ENCODE measurements at regions of chr17 and their contacts with region 1.

Region 1: GRCh38 chr17:81083125-81083765 is 48.3 kb downstream of the BAIAP2 start:
- DNase-seq: no peak
- ATAC-seq: peak; percentile 59

Region 2: DNA sequence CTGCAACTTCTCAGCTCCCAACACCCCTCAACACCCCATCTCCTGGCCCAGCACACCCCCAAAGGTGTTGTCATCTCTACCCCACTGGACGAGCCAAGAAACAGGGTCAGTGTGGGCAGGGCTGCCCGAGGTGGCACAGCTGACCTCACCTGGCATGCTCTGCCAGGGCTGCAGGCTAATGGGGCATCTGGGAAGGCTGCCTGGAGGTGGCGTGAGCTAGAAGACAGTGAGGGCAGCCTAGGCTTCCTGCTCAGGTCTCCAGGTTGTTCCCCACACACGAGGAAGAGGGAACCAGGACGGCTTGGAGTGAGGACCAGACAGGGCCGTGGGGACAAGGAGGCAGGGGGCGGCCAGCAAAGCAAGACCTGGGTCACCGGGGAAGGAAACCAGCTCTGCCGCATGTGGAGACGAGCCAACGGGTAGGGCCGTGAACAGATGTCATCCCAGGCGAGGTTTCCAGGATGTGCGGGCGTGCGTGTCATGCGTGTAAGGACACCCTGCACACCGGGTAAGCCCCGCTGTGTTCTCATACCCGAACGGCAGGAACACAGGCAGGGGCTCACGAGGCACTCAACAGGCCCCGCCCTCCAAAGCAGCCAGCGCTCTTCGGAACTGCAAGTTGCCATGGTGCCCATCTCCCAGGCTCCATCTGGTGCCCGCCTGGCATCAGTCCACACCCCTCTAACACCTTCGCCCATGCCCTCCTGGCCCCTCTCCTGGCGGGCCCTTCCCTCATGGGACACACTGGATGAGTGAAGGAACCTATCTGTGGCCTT is 52.4 kb after region 1 on chr17:
- intact Hi-C with region 1: no loop called
- DNase-seq: no peak
- ATAC-seq: peak; percentile 8

Region 3: GRCh38 chr17:82175951-82176350 is 1092.7 kb after region 1 on chr17:
- intact Hi-C with region 1: loop called (anchors 5 kb)
- DNase-seq: no peak
- ATAC-seq: no peak